Activated T-helper 2 cell treated with anti-CD3 and anti-CD28 coated beads, Interferon-gamma antibody, Interleukin-2, Interleukin-4, amounts not matched to agents 10 μg/mL and 5 μg/mL and 100 μg/mL, durations not matched to agents 14 hours and 24 hours and 36 hours (primary cell): ENCODE measurements at regions of chr14 and their contacts with region 1.

Region 1: GRCh38 chr14:93939304-93940229 is 12.4 kb downstream of the FAM181A start:
- DNase-seq: peak; percentile 86
- H3K4me3 Mint-ChIP-seq: peak overlapping the region; percentile 49
- H3K27ac Mint-ChIP-seq: peak overlapping the region; percentile 67
- H3K4me1 Mint-ChIP-seq: peaks cover 18% of the 10 kb centered on the region
- H3K27me3 Mint-ChIP-seq: no peaks in the 10 kb centered on the region

Region 2: DNA sequence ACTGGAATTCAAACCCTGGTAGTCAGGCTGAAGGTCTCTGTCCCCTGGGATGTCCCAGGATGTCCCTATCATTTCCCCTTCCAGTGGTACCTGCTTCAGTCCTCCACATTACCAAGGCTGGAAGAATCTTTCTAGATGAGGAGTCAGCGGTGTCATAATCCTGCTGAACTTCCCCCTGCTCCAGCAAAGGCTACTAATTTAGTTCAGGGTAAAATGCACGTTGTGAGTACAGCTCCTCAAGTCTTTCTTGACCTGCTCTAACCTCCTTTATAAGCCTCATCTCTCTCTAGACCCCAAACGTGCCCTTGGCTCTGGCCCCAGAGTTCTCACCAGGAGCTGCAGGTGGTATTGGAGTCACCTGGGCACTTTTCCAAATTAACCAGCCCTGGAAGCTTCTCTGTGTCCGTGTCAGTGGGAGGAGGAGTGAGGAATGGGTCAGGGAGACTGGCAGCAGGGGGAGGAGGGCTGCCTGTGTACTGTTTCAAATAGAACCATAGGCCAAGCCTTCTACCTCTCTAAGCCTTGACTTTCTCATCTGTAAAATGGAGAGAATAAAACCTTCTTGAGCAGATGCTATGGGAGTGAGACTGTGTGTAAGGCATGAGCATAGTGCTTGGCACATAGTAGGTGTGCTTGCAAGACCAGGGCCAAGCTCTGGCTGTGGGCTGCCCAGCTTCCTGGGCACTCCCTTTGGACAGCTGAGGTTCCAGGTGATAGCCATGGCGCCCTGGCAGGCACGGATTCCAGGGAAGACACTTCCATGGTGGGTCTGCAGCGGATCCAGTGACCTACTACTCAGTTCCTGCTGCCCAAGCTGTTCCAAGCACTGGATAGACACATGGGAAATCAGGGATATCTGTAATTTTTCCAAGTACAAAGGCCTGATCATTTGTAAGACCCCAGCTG is 12.3 kb after region 1 on chr14:
- intact Hi-C with region 1: no loop called
- DNase-seq: no peak
- H3K4me3 Mint-ChIP-seq: no peak overlapping the region
- H3K27ac Mint-ChIP-seq: peak overlapping the region; percentile 30
- H3K4me1 Mint-ChIP-seq: peaks cover 55% of the 10 kb centered on the region
- H3K27me3 Mint-ChIP-seq: no peaks in the 10 kb centered on the region

Region 3: DNA sequence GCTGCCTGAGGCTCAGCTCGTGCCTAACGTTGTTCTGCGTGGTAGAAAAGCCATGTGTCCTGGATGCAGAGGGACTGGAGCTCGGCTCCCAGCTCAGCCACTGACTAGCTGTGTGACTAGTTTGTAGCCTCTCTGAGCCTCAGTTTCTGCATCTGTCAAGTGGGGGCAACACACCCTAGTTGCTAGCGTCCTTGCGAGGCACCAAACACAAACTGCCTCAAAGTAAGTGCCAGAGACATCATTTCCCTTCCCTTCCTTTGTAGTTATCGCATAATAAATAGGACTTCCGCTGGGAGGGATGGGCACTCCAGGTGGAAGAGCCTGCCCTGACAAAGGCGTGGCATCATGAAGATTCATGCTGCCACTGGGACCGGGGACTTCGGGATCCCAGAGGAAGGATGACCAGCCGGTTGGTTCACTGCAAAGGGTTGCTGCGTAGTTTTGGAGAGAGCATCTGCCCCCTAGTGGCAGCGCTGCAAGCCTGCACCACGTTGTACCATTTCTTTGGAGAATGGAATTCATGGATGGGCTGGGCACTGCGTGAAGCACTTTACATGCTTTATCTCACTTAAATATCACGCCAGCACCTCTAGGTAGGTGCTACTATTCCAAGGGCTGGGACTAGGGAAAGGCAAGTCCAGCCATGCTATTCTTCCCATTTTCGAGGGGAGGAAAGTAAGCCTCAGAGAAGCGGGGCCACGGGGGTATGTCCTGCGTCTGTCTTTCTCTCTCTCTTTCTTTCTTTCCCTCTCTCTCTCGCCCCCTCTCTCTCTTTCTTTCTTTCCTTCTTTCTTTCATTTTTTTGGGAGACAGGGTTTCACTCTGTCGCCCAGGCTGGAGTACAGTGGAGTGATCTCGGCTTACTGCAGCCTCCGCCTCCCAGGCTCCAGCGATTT is 62.2 kb after region 1 on chr14:
- intact Hi-C with region 1: loop called (anchors 1 kb)
- DNase-seq: peak; percentile 52
- H3K4me3 Mint-ChIP-seq: no peak overlapping the region
- H3K27ac Mint-ChIP-seq: peak overlapping the region; percentile 47
- H3K4me1 Mint-ChIP-seq: peaks cover 40% of the 10 kb centered on the region
- H3K27me3 Mint-ChIP-seq: no peaks in the 10 kb centered on the region

Region 4: DNA sequence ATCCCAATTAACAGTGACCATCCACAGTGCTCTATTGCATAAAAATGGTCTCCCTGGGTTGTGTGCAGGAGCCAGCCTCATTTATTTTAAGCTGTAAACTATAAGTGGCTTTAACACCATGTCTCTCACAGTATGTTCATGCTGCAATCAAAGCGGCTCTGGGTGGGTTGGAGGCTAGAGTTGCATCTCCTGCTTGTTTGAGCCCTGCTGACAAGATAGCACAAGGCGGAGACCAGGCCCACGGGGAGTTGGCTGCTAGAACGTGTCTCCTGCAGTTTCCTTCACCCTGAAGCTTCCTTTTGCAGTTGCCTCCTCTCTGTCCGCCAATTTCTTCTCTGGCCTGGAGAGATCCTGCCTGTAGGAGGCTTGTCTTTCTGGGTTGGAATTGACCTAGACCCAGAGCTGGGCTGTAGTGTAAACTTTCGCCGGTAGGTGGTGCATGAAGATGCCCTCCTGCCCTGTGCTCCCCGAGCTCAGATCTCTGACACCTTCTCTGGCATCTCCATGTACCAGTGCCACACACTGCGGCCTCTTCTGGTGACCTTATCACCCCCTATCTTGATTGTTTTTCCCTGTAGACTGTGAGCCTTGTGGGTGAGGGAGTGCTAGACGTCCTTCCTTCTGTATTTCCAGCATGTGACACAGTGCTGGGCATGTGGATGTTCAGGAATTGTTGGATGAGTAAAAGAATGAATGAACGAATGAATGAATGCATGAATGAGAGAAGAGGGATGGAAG is 96.9 kb after region 1 on chr14:
- intact Hi-C with region 1: no loop called
- DNase-seq: peak; percentile 69
- H3K4me3 Mint-ChIP-seq: no peak overlapping the region
- H3K27ac Mint-ChIP-seq: no peak overlapping the region
- H3K4me1 Mint-ChIP-seq: peaks cover 3% of the 10 kb centered on the region
- H3K27me3 Mint-ChIP-seq: no peaks in the 10 kb centered on the region

Region 5: DNA sequence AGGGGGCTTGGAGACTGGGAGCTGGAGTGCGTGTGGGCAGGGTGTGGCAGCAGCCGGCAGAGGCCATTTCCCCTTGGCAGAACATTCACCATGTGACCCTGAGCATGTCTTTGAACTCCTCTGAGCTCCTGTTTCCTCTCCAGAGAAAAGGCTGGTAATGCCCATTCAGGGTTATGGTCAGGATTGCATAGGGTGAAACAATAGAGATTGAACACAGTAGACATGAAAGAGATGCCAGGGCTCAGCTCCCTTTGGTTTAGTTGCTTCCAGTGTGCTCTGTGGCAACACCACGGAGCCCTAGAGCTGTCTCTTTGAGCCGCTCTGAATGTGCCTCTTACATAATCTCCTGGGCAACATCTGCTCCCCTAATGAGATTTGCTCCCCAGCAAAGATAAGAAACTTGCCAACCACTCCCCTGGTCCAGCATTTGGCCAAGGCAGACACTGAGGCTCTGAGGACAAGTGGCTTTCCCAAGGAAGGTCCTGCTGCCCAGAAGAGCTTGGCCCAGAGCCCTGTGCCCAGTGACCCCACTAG is 175.6 kb after region 1 on chr14:
- intact Hi-C with region 1: no loop called
- DNase-seq: no peak
- H3K4me3 Mint-ChIP-seq: no peak overlapping the region
- H3K27ac Mint-ChIP-seq: no peak overlapping the region
- H3K4me1 Mint-ChIP-seq: peaks cover 5% of the 10 kb centered on the region
- H3K27me3 Mint-ChIP-seq: peaks cover 5% of the 10 kb centered on the region

Region 6: GRCh38 chr14:94129758-94130414 is 190.3 kb after region 1 on chr14:
- intact Hi-C with region 1: loop called (anchors 2 kb)
- DNase-seq: peak; percentile 21
- H3K4me3 Mint-ChIP-seq: peak overlapping the region; percentile 81
- H3K27ac Mint-ChIP-seq: no peak overlapping the region
- H3K4me1 Mint-ChIP-seq: peaks cover 19% of the 10 kb centered on the region
- H3K27me3 Mint-ChIP-seq: peaks cover 20% of the 10 kb centered on the region